ENCODE measurements at regions of chr12 and their contacts with region 1.

Region 1: DNA sequence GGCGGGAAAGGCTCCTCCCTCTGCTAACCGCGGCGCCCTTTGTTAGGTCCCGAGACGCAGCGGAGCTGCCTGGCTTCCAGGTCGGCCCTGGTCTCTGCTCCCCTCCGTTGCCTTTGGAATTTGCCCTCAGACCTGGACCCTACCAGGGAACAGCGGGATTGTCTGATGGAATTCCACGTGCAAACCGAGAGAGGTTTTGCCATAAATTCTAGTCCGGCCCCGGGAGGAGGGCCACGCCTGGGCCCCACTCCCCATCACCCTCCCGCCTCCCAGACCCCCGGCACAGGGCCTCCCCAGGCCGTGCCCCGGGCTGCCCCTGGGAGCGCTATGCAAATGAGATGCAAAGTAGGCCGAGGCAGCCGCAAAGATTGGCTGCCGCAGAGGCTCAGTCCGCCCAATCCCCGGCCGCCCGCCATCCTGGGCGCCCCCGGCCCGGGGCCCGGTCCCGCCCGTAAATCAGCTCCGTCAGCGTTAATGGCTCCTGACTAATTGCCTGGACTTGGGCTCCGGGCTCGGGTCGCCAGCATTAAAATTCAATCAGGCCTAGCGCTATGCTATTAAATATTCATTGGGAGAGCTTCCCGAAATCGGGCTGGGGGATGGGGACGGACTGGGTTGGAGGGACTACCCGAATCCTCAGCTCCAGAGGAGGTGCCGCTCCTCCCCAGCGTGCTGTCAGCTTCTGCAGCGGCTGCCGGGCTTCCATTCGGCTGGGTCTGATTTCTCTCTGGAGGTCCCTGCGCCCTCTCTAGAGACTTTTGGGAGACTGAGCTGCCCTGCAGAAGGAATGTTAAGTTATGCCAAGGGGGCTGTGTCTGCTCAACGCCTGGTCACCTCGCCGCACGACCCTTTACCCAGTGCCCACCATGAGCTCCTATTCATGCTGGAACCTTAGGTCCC is 15.7 kb upstream of the FIGNL2 start:
- DNase-seq: peak in 1 of 2 experiments; percentile 89
- H3K4me3 ChIP-seq: peak overlapping the region; percentile 41 to 73 (median 66)
- H3K27ac ChIP-seq: peak overlapping the region; percentile 75
- H3K4me1 ChIP-seq: peaks cover 16 to 36% (median 30%) of the 10 kb centered on the region in 4 experiments
- H3K27me3 ChIP-seq: peaks cover 0 to 23% (median 21%) of the 10 kb centered on the region in 4 experiments; a peak in 5 of 7 replicates
- CTCF ChIP-seq: no peak
- EP300 ChIP-seq: no peak
- POLR2A ChIP-seq: peak in 1 of 2 experiments; percentile 85; a peak in 2 of 3 replicates
- RAD21 ChIP-seq: no peak

Region 2: DNA sequence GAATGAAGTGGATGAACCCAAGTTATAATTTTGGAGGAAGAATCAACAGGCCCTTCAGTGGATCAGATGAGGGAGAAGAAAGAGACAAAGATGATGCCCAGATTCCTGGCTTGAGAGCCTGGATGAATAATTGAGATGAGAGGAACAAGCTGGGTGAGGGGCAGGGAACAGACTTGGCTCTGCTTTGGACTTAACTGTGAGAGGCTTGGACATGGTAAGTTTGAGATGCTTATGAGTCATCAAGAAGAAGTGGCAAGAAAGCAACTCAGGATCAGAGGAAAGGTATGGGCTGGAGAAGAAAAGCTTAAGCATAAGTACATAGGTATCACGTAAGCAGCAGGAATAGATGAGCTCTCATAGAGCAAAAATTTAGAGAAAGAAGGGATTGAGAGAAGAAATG is 71.0 kb before region 1 on chr12:
- CTCF ChIA-PET with region 1: interaction called, 14 read pairs
- POLR2A ChIA-PET with region 1: no interaction called
- DNase-seq: no peak
- H3K4me3 ChIP-seq: no peak overlapping the region
- H3K27ac ChIP-seq: no peak overlapping the region
- H3K4me1 ChIP-seq: no peaks in the 10 kb centered on the region
- H3K27me3 ChIP-seq: no peaks in the 10 kb centered on the region
- CTCF ChIP-seq: no peak
- EP300 ChIP-seq: no peak
- POLR2A ChIP-seq: no peak
- RAD21 ChIP-seq: no peak

Region 3: GRCh38 chr12:51832354-51833107 is 31.7 kb before region 1 on chr12:
- CTCF ChIA-PET with region 1: interaction called, 109 read pairs
- POLR2A ChIA-PET with region 1: interaction called, 11 read pairs
- DNase-seq: no peak
- H3K4me3 ChIP-seq: no peak overlapping the region
- H3K27ac ChIP-seq: no peak overlapping the region
- H3K4me1 ChIP-seq: peaks cover 19 to 58% (median 36%) of the 10 kb centered on the region in 4 experiments
- H3K27me3 ChIP-seq: peaks cover 0 to 3% (median 0%) of the 10 kb centered on the region in 4 experiments; a peak in 1 of 7 replicates
- CTCF ChIP-seq: no peak
- EP300 ChIP-seq: no peak
- POLR2A ChIP-seq: no peak
- RAD21 ChIP-seq: no peak

Region 4: DNA sequence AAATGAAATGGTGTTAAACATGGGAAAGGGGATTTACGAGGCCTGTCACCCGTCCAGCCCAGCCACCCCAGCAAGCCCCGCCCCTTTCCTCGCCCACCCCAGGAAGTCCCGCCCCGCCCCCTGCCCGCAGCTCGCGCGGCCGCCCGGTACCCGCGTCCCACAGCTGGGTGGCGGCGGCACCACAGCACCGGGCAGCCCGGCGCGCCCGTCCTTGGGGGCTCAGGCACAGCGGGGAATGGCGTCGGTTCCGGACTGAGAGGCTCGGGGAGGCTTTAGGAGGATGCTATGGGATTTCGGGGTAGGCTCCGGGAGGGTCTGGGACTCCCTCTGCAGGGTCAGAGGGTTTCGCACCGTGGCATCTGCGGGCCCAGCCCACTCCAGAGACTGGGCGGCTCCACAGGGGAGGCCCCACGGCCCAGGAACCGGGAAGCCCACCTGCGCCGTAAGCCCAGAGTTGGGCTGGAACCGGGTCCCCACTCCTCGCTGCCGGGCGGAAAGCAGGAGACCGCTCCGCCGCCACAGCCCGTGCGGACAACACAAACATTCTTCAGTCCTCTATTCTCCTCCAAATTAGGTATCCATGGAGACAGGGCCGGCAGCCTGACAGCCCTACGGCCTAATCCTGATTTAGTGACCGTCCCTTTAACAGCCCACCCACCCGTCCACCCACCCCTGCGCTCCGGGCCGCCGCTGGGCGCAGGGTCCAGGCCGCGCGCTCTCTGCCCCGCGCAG is 17.1 kb before region 1 on chr12:
- CTCF ChIA-PET with region 1: interaction called, 132 read pairs
- POLR2A ChIA-PET with region 1: interaction called, 107 read pairs
- DNase-seq: peak in 1 of 2 experiments; percentile 81
- H3K4me3 ChIP-seq: peak overlapping the region; percentile 61 to 91 (median 76)
- H3K27ac ChIP-seq: no peak overlapping the region
- H3K4me1 ChIP-seq: peaks cover 12 to 33% (median 24%) of the 10 kb centered on the region in 4 experiments
- H3K27me3 ChIP-seq: peaks cover 6 to 31% (median 31%) of the 10 kb centered on the region in 4 experiments
- CTCF ChIP-seq: no peak
- EP300 ChIP-seq: no peak
- POLR2A ChIP-seq: no peak
- RAD21 ChIP-seq: no peak

Region 5: DNA sequence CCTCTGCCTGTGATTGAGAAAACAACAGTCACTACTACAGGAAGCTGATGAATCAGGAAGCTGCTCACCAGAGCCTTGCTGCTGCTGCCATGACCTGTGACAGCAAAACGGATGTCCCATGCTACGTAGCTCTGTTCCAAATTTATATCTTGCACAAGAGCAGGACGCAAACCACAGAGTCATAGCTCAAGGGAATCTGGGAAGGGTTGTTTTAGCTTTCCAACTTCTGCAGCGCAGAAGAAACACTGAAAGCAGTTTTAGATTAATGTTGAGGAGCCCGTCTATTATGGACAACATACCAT is 21.8 kb after region 1 on chr12:
- CTCF ChIA-PET with region 1: interaction called, 120 read pairs
- POLR2A ChIA-PET with region 1: interaction called, 7 read pairs
- DNase-seq: no peak
- H3K4me3 ChIP-seq: no peak overlapping the region
- H3K27ac ChIP-seq: no peak overlapping the region
- H3K4me1 ChIP-seq: peaks cover 0 to 12% (median 5%) of the 10 kb centered on the region in 4 experiments; a peak in 6 of 7 replicates
- H3K27me3 ChIP-seq: peaks cover 0 to 10% (median 6%) of the 10 kb centered on the region in 4 experiments; a peak in 3 of 7 replicates
- CTCF ChIP-seq: no peak
- EP300 ChIP-seq: no peak
- POLR2A ChIP-seq: no peak
- RAD21 ChIP-seq: no peak

Measured in H1 (cell line).